GM12878 (cell line): ENCODE measurements at regions of chr7 and their contacts with region 1.

Region 1: GRCh38 chr7:2757904-2758672 is 70.1 kb downstream of the AMZ1 start:
- DNase-seq: peak; percentile 78
- ATAC-seq: peak; percentile 88
- H3K4me3 ChIP-seq: peak overlapping the region; percentile 64
- H3K27ac ChIP-seq: peak overlapping the region; percentile 86
- H3K4me1 ChIP-seq: peaks cover 33% of the 10 kb centered on the region
- H3K27me3 ChIP-seq: no peaks in the 10 kb centered on the region
- CTCF ChIP-seq: no peak
- EP300 ChIP-seq: peak in 1 of 2 experiments; percentile 82; a peak in 2 of 4 replicates
- POLR2A ChIP-seq: no peak
- RAD21 ChIP-seq: no peak

Region 2: DNA sequence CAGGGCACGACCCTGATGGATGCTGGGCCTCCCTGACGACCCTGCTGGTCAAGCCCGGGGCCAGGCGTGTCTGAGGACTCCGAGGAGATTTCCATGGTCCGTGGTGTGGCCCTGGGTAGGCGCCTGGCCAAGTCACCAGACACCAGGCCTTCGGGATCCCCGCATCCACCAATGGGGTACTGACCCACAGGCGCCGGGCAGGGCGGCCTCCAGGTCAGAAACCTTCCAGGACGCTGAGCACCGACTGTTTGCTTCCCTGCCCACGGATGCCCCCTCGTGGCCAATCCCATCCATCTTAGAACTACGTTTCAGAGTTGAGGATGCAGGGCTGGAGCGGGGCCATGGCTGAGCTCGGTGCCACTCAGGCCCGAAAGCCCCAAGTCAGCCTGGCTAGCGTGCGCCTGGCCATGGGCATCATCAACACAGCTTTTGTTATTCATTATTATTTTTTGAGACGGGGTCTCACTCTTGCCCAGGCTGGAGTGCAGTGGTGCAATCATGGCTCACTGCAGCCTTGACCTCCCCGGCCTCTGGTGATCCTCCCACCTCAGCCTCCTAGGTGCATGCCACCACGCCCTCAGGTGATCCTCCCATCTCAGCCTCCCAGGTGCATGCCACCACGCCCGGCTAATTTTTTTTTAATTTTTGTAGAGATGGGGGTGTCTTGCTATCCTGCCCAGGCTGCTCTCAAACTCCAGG is 77.1 kb before region 1 on chr7:
- CTCF ChIA-PET with region 1: no interaction called
- POLR2A ChIA-PET with region 1: no interaction called
- RAD21 ChIA-PET with region 1: no interaction called
- SMC1A ChIA-PET with region 1: no interaction called
- in situ Hi-C with region 1: no loop called
- intact Hi-C with region 1: no loop called
- DNase-seq: no peak
- ATAC-seq: peak; percentile 91
- H3K4me3 ChIP-seq: no peak overlapping the region
- H3K27ac ChIP-seq: no peak overlapping the region
- H3K4me1 ChIP-seq: no peaks in the 10 kb centered on the region
- H3K27me3 ChIP-seq: no peaks in the 10 kb centered on the region; a peak in 1 of 4 replicates
- CTCF ChIP-seq: peak; percentile 64 to 72 (median 72)
- EP300 ChIP-seq: no peak
- POLR2A ChIP-seq: no peak
- RAD21 ChIP-seq: peak; percentile 70

Region 3: DNA sequence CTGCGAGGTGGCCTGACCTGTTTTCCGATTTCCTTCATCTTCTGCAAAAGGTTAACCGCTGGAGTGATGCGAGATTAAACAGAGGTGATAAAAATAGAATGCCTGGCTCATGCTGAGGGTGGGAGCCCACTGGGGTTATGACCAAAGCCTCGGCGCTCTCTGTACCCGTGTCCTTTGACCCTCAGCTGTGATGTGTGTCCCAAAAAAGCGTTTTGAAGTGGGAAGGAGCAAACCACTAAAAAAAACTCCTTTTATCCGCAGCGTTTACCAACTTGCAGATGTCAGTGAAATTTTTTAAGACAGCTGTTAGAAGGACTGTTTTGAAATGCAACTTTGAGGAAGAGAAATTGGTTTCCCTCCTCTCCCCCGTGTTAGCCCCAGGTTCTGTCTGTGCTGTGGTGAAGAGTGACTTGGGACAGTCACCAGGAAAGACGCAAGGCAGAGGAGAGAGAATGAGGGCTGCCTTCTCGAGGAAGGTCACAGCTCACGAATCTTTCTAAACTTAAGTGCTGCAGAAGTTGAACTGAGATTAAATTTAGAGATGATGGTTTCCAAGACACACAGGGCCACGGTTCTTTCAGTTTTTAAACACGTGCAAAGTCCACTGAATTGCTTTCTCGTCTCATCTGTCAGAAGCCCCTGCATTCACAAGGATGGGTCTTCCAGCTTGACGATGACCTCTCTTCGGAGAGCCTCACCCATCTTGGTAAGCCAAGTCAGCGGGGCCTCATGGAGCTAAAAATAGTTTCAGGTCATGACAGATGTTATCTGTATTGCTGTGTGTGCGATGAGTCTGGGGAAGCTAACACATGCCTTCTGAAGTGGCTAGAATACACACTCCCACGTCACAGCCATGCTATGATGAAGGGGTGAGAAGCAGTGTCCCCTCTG is 42.5 kb before region 1 on chr7:
- CTCF ChIA-PET with region 1: interaction called, 33 read pairs
- POLR2A ChIA-PET with region 1: interaction called, 15 read pairs
- RAD21 ChIA-PET with region 1: interaction called, 50 read pairs
- SMC1A ChIA-PET with region 1: interaction called, 31 read pairs
- in situ Hi-C with region 1: no loop called
- intact Hi-C with region 1: loop called (anchors 1 kb)
- DNase-seq: no peak
- ATAC-seq: peak; percentile 38
- H3K4me3 ChIP-seq: peak overlapping the region; percentile 17; the same call in 1 of the 2 replicates
- H3K27ac ChIP-seq: peak overlapping the region; percentile 43
- H3K4me1 ChIP-seq: peaks cover 37% of the 10 kb centered on the region
- H3K27me3 ChIP-seq: no peaks in the 10 kb centered on the region
- CTCF ChIP-seq: no peak
- EP300 ChIP-seq: no peak; a peak in 1 of 4 replicates
- POLR2A ChIP-seq: no peak; the same call in 1 of the 2 replicates
- RAD21 ChIP-seq: no peak

Region 4: GRCh38 chr7:2771274-2771731 is 13.2 kb after region 1 on chr7:
- CTCF ChIA-PET with region 1: interaction called, 12 read pairs
- POLR2A ChIA-PET with region 1: interaction called, 17 read pairs
- RAD21 ChIA-PET with region 1: interaction called, 9 read pairs
- SMC1A ChIA-PET with region 1: interaction called, 16 read pairs
- in situ Hi-C with region 1: no loop called
- intact Hi-C with region 1: no loop called
- DNase-seq: no peak
- ATAC-seq: no peak
- H3K4me3 ChIP-seq: no peak overlapping the region
- H3K27ac ChIP-seq: no peak overlapping the region
- H3K4me1 ChIP-seq: peaks cover 10% of the 10 kb centered on the region
- H3K27me3 ChIP-seq: no peaks in the 10 kb centered on the region
- CTCF ChIP-seq: no peak
- EP300 ChIP-seq: no peak
- POLR2A ChIP-seq: no peak
- RAD21 ChIP-seq: no peak

Region 5: DNA sequence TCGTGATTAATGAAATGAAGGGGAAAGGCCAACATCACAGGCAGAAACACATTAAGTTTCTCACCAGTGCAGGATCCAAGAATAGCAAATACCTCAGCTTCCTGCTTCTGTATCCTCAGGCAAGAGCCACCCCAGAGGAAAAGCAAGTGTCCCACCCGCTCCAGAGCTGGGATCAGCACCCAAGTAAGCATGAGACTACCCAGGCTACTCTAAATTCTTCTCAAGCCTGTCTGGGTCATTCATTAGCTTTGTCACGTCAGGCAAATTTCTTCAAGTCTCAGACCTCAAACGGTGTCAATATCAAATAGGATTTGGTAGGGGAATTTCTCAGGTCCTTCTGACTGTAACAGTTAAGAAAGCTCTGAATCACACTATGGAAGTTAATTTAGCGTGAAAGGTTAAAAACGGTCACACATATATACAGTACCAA is 27.0 kb after region 1 on chr7:
- CTCF ChIA-PET with region 1: interaction called, 8 read pairs
- POLR2A ChIA-PET with region 1: interaction called, 11 read pairs
- RAD21 ChIA-PET with region 1: interaction called, 27 read pairs
- SMC1A ChIA-PET with region 1: interaction called, 28 read pairs
- in situ Hi-C with region 1: no loop called
- intact Hi-C with region 1: no loop called
- DNase-seq: peak; percentile 40
- ATAC-seq: peak; percentile 94
- H3K4me3 ChIP-seq: no peak overlapping the region
- H3K27ac ChIP-seq: no peak overlapping the region
- H3K4me1 ChIP-seq: no peaks in the 10 kb centered on the region
- H3K27me3 ChIP-seq: no peaks in the 10 kb centered on the region
- CTCF ChIP-seq: no peak
- EP300 ChIP-seq: peak; percentile 49 to 74; a peak in 3 of 4 replicates
- POLR2A ChIP-seq: no peak
- RAD21 ChIP-seq: no peak

Region 6: GRCh38 chr7:2800931-2801688 is 43.0 kb after region 1 on chr7:
- CTCF ChIA-PET with region 1: interaction called, 4 read pairs
- POLR2A ChIA-PET with region 1: interaction called, 3 read pairs
- RAD21 ChIA-PET with region 1: interaction called, 11 read pairs
- SMC1A ChIA-PET with region 1: interaction called, 16 read pairs
- in situ Hi-C with region 1: no loop called
- intact Hi-C with region 1: no loop called
- DNase-seq: no peak
- ATAC-seq: peak; percentile 45
- H3K4me3 ChIP-seq: no peak overlapping the region
- H3K27ac ChIP-seq: no peak overlapping the region
- H3K4me1 ChIP-seq: peaks cover 8% of the 10 kb centered on the region; the same call in 1 of the 2 replicates
- H3K27me3 ChIP-seq: no peaks in the 10 kb centered on the region
- CTCF ChIP-seq: no peak
- EP300 ChIP-seq: no peak
- POLR2A ChIP-seq: no peak
- RAD21 ChIP-seq: no peak

Region 7: DNA sequence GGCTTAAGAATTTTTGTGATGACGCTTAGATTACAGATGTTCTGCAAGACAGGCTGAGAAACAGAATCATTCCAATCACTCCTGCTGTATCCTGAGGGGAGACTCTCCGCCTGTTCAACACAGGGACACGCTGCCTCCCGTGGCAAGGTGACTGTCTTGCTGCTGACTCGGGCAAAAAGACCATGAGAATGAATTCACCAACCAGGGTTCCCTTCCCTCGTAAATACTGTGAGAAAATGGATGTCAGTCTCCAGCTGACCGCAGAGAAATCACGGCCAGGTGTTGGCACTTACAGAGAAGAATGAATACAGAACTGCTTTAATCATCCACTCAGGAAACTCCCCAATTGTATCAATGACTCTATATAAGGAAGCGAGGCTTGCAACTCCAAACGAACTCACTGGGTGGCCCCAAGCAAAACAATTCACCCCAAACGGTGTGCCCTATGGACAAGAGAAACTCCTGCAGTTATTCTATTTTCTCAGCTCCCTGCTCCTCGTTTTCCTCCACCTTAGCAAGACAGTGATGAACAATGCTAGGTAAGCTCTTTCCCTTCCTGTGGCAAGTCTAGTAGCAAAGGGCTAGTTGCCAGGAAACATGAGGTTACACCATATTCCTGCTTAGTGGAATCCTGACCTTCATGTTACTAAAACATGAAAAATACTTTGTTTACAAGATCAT is 63.2 kb after region 1 on chr7:
- CTCF ChIA-PET with region 1: interaction called, 5 read pairs
- POLR2A ChIA-PET with region 1: interaction called, 11 read pairs
- RAD21 ChIA-PET with region 1: interaction called, 12 read pairs
- SMC1A ChIA-PET with region 1: interaction called, 13 read pairs
- in situ Hi-C with region 1: no loop called
- intact Hi-C with region 1: loop called (anchors 5 kb)
- DNase-seq: peak; percentile 53
- ATAC-seq: peak; percentile 86
- H3K4me3 ChIP-seq: no peak overlapping the region
- H3K27ac ChIP-seq: peak overlapping the region; percentile 4; the same call in 1 of the 2 replicates
- H3K4me1 ChIP-seq: peaks cover 49% of the 10 kb centered on the region
- H3K27me3 ChIP-seq: no peaks in the 10 kb centered on the region
- CTCF ChIP-seq: peak in 2 of 3 experiments; percentile 6 to 8; a peak in 2 of 6 replicates
- EP300 ChIP-seq: peak; percentile 63 to 70; a peak in 2 of 4 replicates
- POLR2A ChIP-seq: no peak
- RAD21 ChIP-seq: peak; percentile 27; the same call in 1 of the 2 replicates

Region 8: GRCh38 chr7:2844165-2844898 is 86.2 kb after region 1 on chr7 and contains the start of gene GNA12:
- CTCF ChIA-PET with region 1: interaction called, 3 read pairs
- POLR2A ChIA-PET with region 1: interaction called, 3 read pairs
- RAD21 ChIA-PET with region 1: interaction called, 9 read pairs
- SMC1A ChIA-PET with region 1: interaction called, 6 read pairs
- in situ Hi-C with region 1: no loop called
- intact Hi-C with region 1: loop called (anchors 2 kb)
- DNase-seq: peak; percentile 94
- ATAC-seq: peak; percentile 97
- H3K4me3 ChIP-seq: peak within 1 kb of the TSS; percentile 80
- H3K27ac ChIP-seq: peak within 1 kb of the TSS; percentile 33; the same call in 1 of the 2 replicates
- H3K4me1 ChIP-seq: peaks cover 8% of the 10 kb centered on the region
- H3K27me3 ChIP-seq: no peaks in the 10 kb centered on the region
- CTCF ChIP-seq: no peak
- EP300 ChIP-seq: no peak
- POLR2A ChIP-seq: peak; percentile 69
- RAD21 ChIP-seq: no peak
- polyA plus RNA-seq, gene GNA12: 1.9 to 3.0 TPM